Activated CD8-positive, alpha-beta T cell treated with anti-CD3 and anti-CD28 coated beads for 36 hours (primary cell): ENCODE measurements at regions of chr1 and their contacts with region 1.

Region 1: GRCh38 chr1:48093696-48094528 is 96.7 kb upstream of the TRABD2B start:
- DNase-seq: peak; percentile 85
- ATAC-seq: peak; percentile 96
- H3K4me3 Mint-ChIP-seq: no peak overlapping the region
- H3K27ac Mint-ChIP-seq: no peak overlapping the region
- H3K4me1 Mint-ChIP-seq: peaks cover 6% of the 10 kb centered on the region
- H3K27me3 Mint-ChIP-seq: peaks cover 43% of the 10 kb centered on the region
- CTCF ChIP-seq: peak; percentile 91

Region 2: GRCh38 chr1:47941609-47942239 is 152.2 kb before region 1 on chr1:
- CTCF ChIA-PET with region 1: no interaction called
- POLR2A ChIA-PET with region 1: no interaction called
- intact Hi-C with region 1: no loop called
- DNase-seq: no peak
- ATAC-seq: no peak
- H3K4me3 Mint-ChIP-seq: no peak overlapping the region
- H3K27ac Mint-ChIP-seq: no peak overlapping the region
- H3K4me1 Mint-ChIP-seq: no peaks in the 10 kb centered on the region
- H3K27me3 Mint-ChIP-seq: peaks cover 7% of the 10 kb centered on the region
- CTCF ChIP-seq: no peak

Region 3: GRCh38 chr1:47953661-47954060 is 140.3 kb before region 1 on chr1:
- CTCF ChIA-PET with region 1: no interaction called
- POLR2A ChIA-PET with region 1: no interaction called
- intact Hi-C with region 1: no loop called
- DNase-seq: no peak
- ATAC-seq: no peak
- H3K4me3 Mint-ChIP-seq: no peak overlapping the region
- H3K27ac Mint-ChIP-seq: no peak overlapping the region
- H3K4me1 Mint-ChIP-seq: no peaks in the 10 kb centered on the region
- H3K27me3 Mint-ChIP-seq: peaks cover 10% of the 10 kb centered on the region
- CTCF ChIP-seq: no peak

Region 4: DNA sequence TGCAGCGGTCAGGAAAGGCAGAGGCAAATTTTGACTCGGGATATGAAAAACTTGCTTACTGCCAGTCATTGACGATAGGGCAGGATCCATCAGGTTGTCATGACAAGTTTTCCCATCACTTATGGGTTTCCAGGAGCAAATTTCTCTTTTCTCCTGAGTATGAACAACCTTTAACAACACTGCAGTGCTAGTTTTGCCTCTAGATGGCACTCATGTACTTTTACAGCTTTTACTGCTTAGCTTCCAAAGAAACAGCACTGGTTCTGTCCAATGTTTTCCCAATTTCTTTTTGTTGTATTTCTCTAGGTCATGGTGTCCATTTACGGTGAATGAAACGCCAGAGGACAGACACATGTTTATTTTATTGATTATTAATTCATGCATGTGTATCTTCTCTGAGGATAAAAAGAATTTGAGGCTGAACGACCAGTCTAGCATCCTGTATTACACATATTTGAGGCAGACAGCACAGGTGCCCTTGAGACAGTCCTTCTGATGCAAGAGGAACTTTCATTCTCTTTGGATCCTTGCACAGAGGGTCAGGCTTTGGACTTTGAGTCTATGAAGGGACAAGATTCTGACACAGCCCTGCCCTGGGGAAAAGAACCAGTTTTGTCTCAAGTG is 15.6 kb after region 1 on chr1:
- CTCF ChIA-PET with region 1: interaction called, 18 read pairs
- POLR2A ChIA-PET with region 1: no interaction called
- intact Hi-C with region 1: no loop called
- DNase-seq: no peak
- ATAC-seq: no peak
- H3K4me3 Mint-ChIP-seq: no peak overlapping the region
- H3K27ac Mint-ChIP-seq: no peak overlapping the region
- H3K4me1 Mint-ChIP-seq: peaks cover 4% of the 10 kb centered on the region
- H3K27me3 Mint-ChIP-seq: peaks cover 7% of the 10 kb centered on the region
- CTCF ChIP-seq: peak; percentile 73

Region 5: GRCh38 chr1:48202030-48202752 is 108.3 kb after region 1 on chr1:
- CTCF ChIA-PET with region 1: interaction called, 17 read pairs
- POLR2A ChIA-PET with region 1: no interaction called
- intact Hi-C with region 1: no loop called
- DNase-seq: peak; percentile 66
- ATAC-seq: peak; percentile 80
- H3K4me3 Mint-ChIP-seq: no peak overlapping the region
- H3K27ac Mint-ChIP-seq: no peak overlapping the region
- H3K4me1 Mint-ChIP-seq: peaks cover 6% of the 10 kb centered on the region
- H3K27me3 Mint-ChIP-seq: peaks cover 6% of the 10 kb centered on the region
- CTCF ChIP-seq: peak; percentile 89

Region 6: DNA sequence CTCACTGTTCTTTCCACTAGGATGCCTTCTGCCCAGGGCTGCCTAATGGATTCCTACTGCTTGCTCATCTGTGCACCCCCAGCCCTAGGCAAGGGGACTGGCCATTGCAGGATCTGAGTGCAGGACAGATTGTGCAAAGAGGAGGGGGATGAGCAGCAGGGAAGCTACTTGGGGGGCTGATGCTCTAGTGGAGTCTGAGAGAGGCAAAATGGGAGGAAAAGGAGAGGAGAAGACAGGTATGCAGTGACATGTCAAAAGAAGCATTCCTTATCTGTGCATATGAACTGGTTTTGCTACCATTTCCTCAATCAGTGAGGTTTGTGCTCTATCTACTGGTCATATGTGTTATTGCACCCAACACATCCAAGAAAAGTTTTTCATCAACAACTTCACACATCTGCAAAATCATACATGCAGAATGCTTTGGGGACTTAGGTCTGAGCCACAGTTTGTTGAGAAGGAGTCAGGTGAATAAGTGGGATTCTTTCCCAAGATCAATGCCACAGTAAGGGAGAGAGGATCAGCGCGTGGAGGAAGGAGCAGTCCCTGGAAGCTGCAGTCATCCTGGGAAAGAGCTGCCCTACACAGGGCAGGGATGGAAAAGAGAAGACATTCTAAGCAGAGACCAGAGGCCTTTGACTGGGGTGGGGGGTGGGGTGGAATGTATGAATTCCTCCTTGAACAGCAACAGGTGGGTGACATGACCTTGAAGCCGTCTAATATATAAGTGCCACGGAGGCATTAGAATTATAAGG is 143.0 kb after region 1 on chr1:
- CTCF ChIA-PET with region 1: interaction called, 14 read pairs
- POLR2A ChIA-PET with region 1: no interaction called
- intact Hi-C with region 1: no loop called
- DNase-seq: no peak
- ATAC-seq: no peak
- H3K4me3 Mint-ChIP-seq: no peak overlapping the region
- H3K27ac Mint-ChIP-seq: no peak overlapping the region
- H3K4me1 Mint-ChIP-seq: no peaks in the 10 kb centered on the region
- H3K27me3 Mint-ChIP-seq: no peaks in the 10 kb centered on the region
- CTCF ChIP-seq: peak; percentile 66